Activated B cell treated with CpG ODN at 0.5 μM for 24 hours (primary cell): ENCODE measurements at regions of chr20 and their contacts with region 1.

Region 1: GRCh38 chr20:62121776-62122631 is at the start of gene LSM14B:
- DNase-seq: peak; percentile 95
- ATAC-seq: peak; percentile 87
- H3K4me3 Mint-ChIP-seq: peak within 1 kb of the TSS; percentile 88
- H3K27ac Mint-ChIP-seq: peak within 1 kb of the TSS; percentile 89
- H3K4me1 Mint-ChIP-seq: peaks cover 19% of the 10 kb centered on the region
- H3K27me3 Mint-ChIP-seq: no peaks in the 10 kb centered on the region
- CTCF ChIP-seq: no peak
- total RNA-seq, gene LSM14B: 35.4 and 36.4 TPM in 2 replicates

Region 2: DNA sequence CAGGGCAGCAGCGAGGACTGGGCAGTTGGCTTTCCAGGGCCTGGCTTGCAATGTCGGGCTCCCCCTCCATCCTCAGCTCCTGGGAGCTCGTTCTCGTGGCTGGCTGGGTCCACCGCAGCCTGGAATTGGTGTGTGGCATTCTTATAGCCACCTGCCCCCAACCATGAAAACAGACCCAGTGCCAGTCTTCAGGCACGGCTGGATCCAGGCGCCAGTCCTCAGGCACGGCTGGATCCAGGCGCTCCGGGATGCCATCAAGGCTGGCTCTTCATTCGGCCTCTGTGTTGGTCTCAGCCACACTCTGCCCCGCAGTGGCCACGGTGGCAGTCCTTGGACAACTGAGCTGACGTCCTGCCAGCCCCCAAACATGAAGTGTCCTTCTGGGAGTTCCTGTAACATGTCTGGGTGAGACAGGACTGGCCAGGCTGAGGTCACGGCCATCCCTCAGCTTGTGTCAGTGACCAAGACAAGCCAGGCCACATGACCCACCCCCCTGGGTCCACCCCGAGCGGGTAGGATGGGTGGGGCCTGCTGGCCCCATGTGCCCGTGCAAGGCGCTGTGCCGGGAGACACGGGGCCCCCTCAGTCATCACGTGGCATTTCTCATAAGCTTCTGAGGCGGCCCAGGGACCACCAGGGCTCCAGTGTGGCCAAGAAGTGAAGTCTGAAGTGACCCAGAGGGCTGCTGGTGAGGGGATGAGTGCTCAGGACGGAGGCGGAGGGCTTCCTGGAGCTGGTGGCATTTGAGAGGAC is 155.3 kb before region 1 on chr20:
- CTCF ChIA-PET with region 1: no interaction called
- POLR2A ChIA-PET with region 1: no interaction called
- intact Hi-C with region 1: no loop called
- DNase-seq: no peak
- ATAC-seq: no peak
- H3K4me3 Mint-ChIP-seq: no peak overlapping the region
- H3K27ac Mint-ChIP-seq: no peak overlapping the region
- H3K4me1 Mint-ChIP-seq: no peaks in the 10 kb centered on the region
- H3K27me3 Mint-ChIP-seq: peaks cover 13% of the 10 kb centered on the region
- CTCF ChIP-seq: no peak

Region 3: DNA sequence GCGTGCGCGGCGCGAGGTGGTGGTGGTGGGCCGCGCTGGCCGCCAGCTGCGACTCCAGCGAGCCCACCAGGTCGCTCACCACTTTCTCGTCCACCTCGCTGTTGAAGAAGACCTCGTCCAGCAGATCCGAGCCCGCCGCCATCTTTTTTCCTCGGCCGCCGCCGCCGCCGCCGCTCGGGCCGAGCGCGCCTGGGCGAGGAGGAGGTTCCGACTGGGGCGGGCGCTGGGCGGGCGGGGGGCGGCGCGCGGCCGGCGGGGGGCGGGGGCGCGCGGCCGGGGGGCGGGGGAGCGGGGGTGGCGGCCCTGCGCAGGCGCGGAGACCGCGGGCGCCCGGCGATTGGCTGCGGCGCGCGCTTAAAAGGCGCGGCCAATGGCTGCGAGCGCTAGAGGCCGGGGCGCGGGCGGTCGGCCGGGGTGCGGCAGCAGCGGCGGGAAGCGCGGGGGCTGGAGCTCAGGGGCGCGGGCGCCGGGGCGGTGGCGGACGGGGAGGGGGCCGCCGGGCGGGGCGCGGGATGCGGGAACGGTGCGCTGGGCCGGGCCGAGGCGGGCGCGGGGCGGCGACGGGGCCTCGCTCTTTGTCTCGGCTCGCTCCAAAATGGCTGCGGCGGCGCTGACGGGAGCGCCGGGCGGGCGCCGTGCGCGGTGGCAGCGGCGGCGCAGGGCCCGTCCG is 56.2 kb before region 1 on chr20 and contains the start of gene TAF4:
- CTCF ChIA-PET with region 1: interaction called, 3 read pairs
- POLR2A ChIA-PET with region 1: interaction called, 40 read pairs
- intact Hi-C with region 1: loop called (anchors 1 kb)
- DNase-seq: peak; percentile 83
- ATAC-seq: peak; percentile 79
- H3K4me3 Mint-ChIP-seq: peak within 1 kb of the TSS; percentile 88
- H3K27ac Mint-ChIP-seq: peak within 1 kb of the TSS; percentile 89
- H3K4me1 Mint-ChIP-seq: peaks cover 49% of the 10 kb centered on the region
- H3K27me3 Mint-ChIP-seq: peaks cover 3% of the 10 kb centered on the region
- CTCF ChIP-seq: no peak
- total RNA-seq, gene TAF4: 24.9 and 26.9 TPM in 2 replicates

Region 4: DNA sequence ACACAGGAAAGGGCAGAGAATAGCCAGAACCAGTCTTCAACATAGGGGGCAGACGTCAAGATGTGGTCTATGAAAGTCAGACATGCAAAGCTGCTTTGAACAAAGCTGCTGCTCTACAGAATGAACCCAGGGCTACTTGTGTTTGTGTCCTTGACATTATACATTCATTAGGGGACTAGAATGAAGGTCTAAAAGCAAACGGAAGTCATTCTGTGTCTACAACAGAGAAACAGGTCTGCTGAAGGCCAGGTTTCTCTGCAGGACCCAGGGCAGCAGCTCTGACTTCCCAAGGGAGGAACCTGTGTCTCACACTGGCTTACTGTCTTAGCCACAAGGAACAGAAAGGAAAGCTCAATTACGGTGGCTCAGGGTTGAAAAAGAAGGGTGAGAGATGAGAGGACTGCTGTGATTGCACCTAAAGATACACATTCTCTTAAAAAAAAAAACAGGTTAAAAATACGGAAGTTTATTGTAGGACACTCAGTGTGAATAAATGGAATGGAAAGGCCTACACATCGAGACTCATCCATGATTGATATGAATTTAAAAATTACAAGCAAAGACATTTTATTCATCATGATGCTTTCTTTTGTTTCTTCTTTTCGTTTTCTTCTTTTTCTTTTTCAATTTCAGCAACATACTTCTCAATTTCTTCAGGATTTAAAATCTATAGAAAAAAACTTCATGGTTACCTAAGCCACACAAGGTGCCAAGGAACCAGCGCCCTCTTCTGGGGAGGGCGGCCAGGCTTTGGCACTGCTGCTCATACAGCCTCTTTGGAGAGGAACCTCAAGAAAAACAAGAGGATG is 14.5 kb after region 1 on chr20:
- CTCF ChIA-PET with region 1: interaction called, 4 read pairs
- POLR2A ChIA-PET with region 1: interaction called, 12 read pairs
- intact Hi-C with region 1: no loop called
- DNase-seq: peak; percentile 40
- ATAC-seq: peak; percentile 80
- H3K4me3 Mint-ChIP-seq: no peak overlapping the region
- H3K27ac Mint-ChIP-seq: no peak overlapping the region
- H3K4me1 Mint-ChIP-seq: peaks cover 37% of the 10 kb centered on the region
- H3K27me3 Mint-ChIP-seq: no peaks in the 10 kb centered on the region
- CTCF ChIP-seq: no peak

Region 5: DNA sequence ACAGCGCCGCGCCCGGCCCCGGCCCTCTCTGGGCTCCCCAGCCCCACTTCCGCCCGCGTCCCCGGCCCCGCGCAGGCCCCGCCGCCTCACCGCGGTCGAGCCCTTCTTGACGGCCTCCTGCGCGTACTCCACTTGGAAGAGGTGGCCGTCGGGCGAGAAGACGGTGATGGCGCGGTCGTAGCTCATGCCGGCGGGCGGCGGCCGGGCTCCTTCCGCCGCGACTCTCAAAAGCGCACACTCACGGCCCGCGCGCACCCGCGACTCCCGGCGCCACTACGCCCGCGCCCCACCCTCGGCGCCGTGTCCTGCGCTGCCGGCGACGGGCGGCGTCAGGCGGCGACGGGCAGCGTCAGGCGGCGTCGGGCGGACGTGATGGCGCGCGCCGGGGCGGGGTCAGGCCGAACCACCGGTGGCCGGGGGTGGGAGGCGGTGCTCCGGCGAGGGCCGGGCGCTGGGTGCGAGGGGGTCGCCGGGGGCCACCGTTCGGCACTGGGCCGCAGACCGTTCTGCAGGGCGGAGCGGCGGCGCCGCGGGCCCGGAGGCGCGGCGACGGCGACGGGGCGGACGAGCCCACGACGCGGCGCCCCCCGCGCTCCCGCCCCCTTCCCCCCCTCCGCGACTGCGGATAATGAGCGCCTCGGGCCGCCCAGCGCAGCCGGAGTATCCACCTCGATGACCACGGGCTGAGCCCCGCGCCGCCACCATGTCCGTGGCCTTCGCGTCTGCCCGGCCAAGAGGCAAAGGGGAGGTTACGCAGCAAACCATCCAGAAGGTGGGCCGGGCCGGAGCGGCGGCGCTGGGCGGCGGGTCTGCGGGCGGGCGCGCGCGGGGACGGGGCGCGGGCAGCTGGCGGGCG is 21.3 kb after region 1 on chr20 and contains the starts of genes PSMA7 and SS18L1:
- CTCF ChIA-PET with region 1: no interaction called
- POLR2A ChIA-PET with region 1: interaction called, 12 read pairs
- intact Hi-C with region 1: loop called (anchors 1 kb)
- DNase-seq: peak; percentile 88
- ATAC-seq: peak; percentile 89
- H3K4me3 Mint-ChIP-seq: peak within 1 kb of the TSS; percentile 89
- H3K27ac Mint-ChIP-seq: peak within 1 kb of the TSS; percentile 78
- H3K4me1 Mint-ChIP-seq: peaks cover 36% of the 10 kb centered on the region
- H3K27me3 Mint-ChIP-seq: no peaks in the 10 kb centered on the region
- CTCF ChIP-seq: no peak
- total RNA-seq, gene PSMA7: 241 and 260 TPM in 2 replicates
- total RNA-seq, gene SS18L1: 9.0 and 9.1 TPM in 2 replicates

Region 6: GRCh38 chr20:62182613-62183425 is 60.8 kb after region 1 on chr20 and contains the start of gene MTG2:
- CTCF ChIA-PET with region 1: no interaction called
- POLR2A ChIA-PET with region 1: interaction called, 8 read pairs
- intact Hi-C with region 1: loop called (anchors 1 kb)
- DNase-seq: peak; percentile 87
- ATAC-seq: peak; percentile 92
- H3K4me3 Mint-ChIP-seq: peak within 1 kb of the TSS; percentile 92
- H3K27ac Mint-ChIP-seq: peak within 1 kb of the TSS; percentile 92
- H3K4me1 Mint-ChIP-seq: peaks cover 43% of the 10 kb centered on the region
- H3K27me3 Mint-ChIP-seq: no peaks in the 10 kb centered on the region
- CTCF ChIP-seq: no peak
- total RNA-seq, gene MTG2: 40.8 and 46.8 TPM in 2 replicates